ENCODE measurements at regions of chr5 and their contacts with region 1.

Region 1: DNA sequence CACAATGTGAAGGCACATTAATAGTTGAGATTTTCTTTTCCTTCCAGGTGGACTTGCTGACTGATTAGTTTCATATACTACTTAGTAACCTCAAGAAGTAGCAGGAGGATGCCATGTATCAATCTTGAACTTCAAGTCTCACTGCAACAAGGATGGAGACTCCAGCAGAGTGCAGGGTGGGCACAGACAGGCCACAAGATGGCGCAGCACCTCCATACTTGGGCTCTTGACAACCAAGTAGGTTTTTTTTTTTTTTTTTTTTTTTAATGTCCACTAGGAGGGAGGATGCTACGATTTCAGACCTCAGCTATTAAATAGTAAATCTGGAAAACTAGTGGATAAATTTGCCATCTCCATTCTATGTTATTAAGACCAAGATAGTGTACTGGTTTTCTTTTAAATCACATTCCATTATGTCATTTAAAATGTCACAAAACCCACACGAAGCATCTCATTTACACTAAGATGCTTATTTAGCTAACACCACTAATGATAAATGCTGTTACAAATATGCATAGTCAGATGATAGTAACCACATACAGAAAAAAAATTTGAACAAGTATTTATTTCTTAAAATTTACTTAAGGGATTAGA is 58.6 kb downstream of the IL6ST start:
- DNase-seq: peak; percentile 80
- H3K4me3 ChIP-seq: no peak overlapping the region
- H3K27ac ChIP-seq: no peak overlapping the region
- H3K4me1 ChIP-seq: no peaks in the 10 kb centered on the region
- CTCF ChIP-seq: peak; percentile 98

Region 2: GRCh38 chr5:55897905-55898304 is 38.3 kb before region 1 on chr5:
- CTCF ChIA-PET with region 1: no interaction called
- POLR2A ChIA-PET with region 1: no interaction called
- intact Hi-C with region 1: no loop called
- DNase-seq: no peak
- H3K4me3 ChIP-seq: no peak overlapping the region
- H3K27ac ChIP-seq: no peak overlapping the region
- H3K4me1 ChIP-seq: no peaks in the 10 kb centered on the region
- CTCF ChIP-seq: no peak

Region 3: DNA sequence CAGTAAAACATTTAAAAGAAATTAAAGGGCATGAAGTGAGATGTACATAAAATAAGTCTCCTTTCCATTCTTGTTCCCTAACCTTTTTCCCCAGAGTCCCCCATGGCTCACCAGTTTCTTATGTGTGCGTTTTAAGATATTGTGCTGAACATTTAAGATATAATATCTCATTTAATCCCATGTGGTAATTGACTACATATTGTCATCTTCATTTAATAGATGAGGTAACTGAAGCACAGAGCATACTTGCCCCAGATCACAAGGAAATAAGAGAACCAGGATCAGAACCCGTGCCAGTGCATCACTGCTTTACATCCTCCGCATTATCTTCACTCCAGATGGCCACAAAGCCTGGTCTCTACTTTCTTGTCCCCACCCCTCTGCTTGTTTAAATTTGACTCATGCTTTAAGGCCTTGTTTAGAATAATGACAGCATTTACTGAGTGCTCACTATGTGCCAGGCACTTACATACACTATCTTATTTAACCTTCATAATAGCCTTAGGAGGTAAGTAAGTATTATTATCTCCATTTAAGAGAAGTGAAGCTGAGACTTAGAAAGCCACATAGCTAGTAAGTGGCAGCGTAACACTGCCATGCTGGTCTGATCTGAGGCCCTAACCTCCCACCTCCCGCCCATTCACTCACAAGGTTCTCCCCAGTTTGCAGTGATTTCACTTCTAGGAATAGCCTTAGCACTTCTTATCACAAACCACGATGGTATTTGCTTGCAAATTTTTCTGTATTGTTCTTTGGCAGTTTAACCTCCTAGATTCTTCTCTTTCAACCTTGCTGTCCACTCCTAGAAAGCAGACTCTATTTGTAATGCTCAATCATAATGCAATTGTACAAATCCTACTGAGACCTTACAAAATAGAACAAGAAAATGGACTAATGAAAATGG is 136.9 kb after region 1 on chr5:
- CTCF ChIA-PET with region 1: no interaction called
- POLR2A ChIA-PET with region 1: no interaction called
- intact Hi-C with region 1: loop called (anchors 1 kb)
- DNase-seq: no peak
- H3K4me3 ChIP-seq: no peak overlapping the region
- H3K27ac ChIP-seq: no peak overlapping the region
- H3K4me1 ChIP-seq: no peaks in the 10 kb centered on the region
- CTCF ChIP-seq: no peak

Region 4: GRCh38 chr5:56200856-56201666 is 264.9 kb after region 1 on chr5:
- CTCF ChIA-PET with region 1: no interaction called
- POLR2A ChIA-PET with region 1: interaction called, 3 read pairs
- intact Hi-C with region 1: loop called (anchors 2 kb)
- DNase-seq: peak; percentile 50
- H3K4me3 ChIP-seq: no peak overlapping the region
- H3K27ac ChIP-seq: no peak overlapping the region
- H3K4me1 ChIP-seq: no peaks in the 10 kb centered on the region
- CTCF ChIP-seq: peak; percentile 75

Region 5: GRCh38 chr5:57277085-57277484 is 1340.9 kb after region 1 on chr5:
- CTCF ChIA-PET with region 1: no interaction called
- POLR2A ChIA-PET with region 1: no interaction called
- intact Hi-C with region 1: loop called (anchors 10 kb)
- DNase-seq: peak; percentile 36
- H3K4me3 ChIP-seq: no peak overlapping the region
- H3K27ac ChIP-seq: no peak overlapping the region
- H3K4me1 ChIP-seq: no peaks in the 10 kb centered on the region
- CTCF ChIP-seq: peak; percentile 77

Measured in OCI-LY7 (cell line).